ENCODE measurements at regions of chr10 and their contacts with region 1.

Region 1: GRCh38 chr10:87861953-87862678 is 1.2 kb downstream of the KLLN start:
- DNase-seq: peak; percentile 97

Region 2: DNA sequence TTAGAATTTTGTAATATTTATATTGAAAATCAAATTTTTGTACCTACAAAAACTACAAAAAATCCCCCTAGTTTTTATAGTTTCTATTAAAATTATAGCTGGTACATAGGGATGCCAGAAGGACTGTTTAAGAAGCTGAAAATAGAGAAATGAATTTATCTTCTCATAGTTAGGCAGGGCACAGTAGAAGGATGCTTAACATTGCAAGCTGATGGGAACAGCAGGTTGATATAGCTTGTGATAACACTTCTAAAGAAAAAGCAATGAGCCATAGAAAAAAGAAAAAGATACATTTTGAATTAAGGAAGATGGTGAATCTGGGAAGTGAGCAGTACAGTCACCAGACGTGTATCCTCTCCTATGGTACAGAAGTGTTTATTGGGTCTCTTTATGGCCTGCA is 33.3 kb after region 1 on chr10:
- in situ Hi-C with region 1: no loop called
- DNase-seq: no peak

Region 3: GRCh38 chr10:87952612-87953011 is 90.5 kb after region 1 on chr10:
- in situ Hi-C with region 1: no loop called
- DNase-seq: no peak

Region 4: GRCh38 chr10:88042160-88043100 is 180.3 kb after region 1 on chr10:
- in situ Hi-C with region 1: no loop called
- DNase-seq: no peak

Region 5: GRCh38 chr10:88553116-88553752 is 691.1 kb after region 1 on chr10:
- in situ Hi-C with region 1: loop called (anchors 25 kb)
- DNase-seq: peak; percentile 52